K562 (cell line): ENCODE measurements at regions of chr22 and their contacts with region 1.

Region 1: DNA sequence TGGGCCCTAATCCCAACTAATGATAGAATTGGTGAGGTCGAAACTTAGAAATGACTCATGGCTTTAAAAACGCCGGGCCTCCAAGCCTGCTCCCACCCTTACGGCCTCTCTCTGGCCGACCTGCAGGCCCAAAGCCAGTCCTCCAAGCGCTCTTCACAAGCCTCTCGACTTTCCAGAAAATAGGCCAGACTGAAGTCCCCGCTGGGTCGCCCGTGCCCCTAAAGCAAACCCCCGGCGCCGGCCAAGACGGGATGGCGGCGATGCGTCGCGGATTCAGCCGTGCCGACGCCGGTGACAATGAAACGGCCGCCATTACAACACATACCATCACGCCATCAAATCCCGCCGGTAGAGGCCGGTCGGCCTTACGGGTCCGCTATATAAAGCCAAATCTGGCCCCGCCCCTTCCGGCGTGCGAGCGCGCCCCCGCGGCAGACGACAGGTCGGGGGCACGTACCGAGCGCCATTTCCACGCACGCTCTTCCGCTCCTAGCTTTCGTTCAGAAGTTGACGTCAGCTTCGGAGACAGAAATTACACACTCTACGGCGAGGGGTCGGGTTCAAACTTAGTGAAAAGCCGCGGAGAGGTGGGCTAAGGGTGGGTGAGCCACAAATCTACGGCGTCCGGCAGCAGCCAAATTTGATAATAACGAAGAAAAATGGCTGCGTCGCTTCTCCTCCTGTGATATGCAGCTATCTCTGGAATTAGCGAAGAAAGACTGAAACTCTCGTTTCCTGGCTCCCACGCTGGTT is at the start of gene RPL3:
- DNase-seq: peak; percentile 77 to 95 (median 84)
- ATAC-seq: peak; percentile 79
- H3K4me3 ChIP-seq: peak within 1 kb of the TSS; percentile 69
- H3K27ac ChIP-seq: peak within 1 kb of the TSS; percentile 100
- H3K4me1 ChIP-seq: peaks cover 13 to 20% of the 10 kb centered on the region in 2 experiments; a peak in 4 of 5 replicates
- H3K27me3 ChIP-seq: no peaks in the 10 kb centered on the region
- CTCF ChIP-seq: 0 out of 6 replicates have a peak, but pooled peaks of 1 of the 3 experiments have one; percentile 12
- EP300 ChIP-seq: peak; percentile 25; the same call in 1 of the 2 replicates
- POLR2A ChIP-seq: peak; percentile 100
- RAD21 ChIP-seq: no peak
- polyA plus RNA-seq, gene RPL3: 3,338 to 4,066 TPM

Region 2: DNA sequence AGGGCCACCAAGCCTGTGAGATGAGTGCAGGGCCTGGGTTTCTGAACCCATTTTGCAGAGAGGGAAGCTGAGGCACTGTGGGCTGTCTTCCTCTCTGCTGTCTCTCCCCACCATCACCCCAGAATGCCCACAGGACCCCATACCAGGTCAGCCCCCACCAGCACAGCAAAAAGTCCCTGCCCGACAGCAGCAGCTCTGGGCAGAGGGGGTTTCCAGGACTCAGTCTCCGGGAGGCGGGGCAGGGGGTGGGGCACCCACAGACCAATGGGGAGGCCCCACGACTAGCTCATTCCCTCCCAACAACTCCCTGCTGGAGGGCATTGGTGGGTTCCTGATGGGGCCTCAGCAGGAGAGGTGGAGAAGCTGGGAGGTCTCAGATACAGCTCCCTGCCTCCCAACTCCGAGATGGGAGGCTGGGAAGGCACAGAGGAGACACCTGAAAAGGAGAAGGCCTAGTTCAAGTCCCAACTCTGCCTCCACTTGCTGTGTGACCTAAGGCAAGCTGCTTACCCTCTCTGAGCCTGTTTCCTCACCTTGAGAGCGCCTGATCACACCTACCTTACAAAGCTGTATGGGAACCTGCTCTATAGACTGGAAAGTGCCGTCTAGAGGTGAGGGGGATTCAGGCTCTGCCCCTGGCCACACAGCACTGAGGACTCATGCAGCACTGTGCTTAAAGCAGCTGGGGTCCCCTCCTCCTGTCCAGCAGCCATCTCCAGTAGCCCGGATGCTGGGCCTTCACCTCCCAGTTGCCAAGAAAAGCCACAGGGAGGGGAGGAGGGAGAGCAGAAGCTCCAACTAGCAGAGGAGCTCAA is 170.5 kb before region 1 on chr22:
- CTCF ChIA-PET with region 1: no interaction called
- POLR2A ChIA-PET with region 1: interaction called, 12 read pairs
- in situ Hi-C with region 1: no loop called
- intact Hi-C with region 1: no loop called
- DNase-seq: peak in 3 of 4 experiments; percentile 52 to 60 (median 58)
- ATAC-seq: no peak
- H3K4me3 ChIP-seq: no peak overlapping the region
- H3K27ac ChIP-seq: no peak overlapping the region; the same call in 2 of the 3 replicates
- H3K4me1 ChIP-seq: peaks cover 7 to 55% of the 10 kb centered on the region in 2 experiments; a peak in 4 of 5 replicates
- H3K27me3 ChIP-seq: no peaks in the 10 kb centered on the region
- CTCF ChIP-seq: no peak
- EP300 ChIP-seq: no peak
- POLR2A ChIP-seq: no peak
- RAD21 ChIP-seq: no peak

Region 3: DNA sequence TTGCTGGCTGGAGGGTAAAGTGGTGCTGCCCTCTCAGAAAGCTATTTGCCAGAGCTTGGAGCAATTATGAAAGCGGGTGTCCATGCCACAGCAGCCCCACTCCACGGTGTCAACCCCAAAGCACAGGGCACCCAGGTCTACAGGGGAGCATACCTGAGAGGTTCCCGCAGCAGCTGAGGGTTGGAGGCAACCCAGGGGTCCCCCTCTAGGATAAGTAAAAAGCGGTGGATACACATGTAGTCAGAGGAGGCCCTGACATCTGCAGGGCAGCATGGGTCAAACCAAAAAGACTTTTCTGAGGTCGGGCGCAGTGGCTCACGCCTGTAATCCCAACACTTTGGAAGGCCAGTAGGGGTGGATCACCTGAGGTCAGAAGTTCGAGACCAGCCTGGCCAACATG is 129.2 kb before region 1 on chr22:
- CTCF ChIA-PET with region 1: no interaction called
- POLR2A ChIA-PET with region 1: interaction called, 11 read pairs
- in situ Hi-C with region 1: no loop called
- intact Hi-C with region 1: no loop called
- DNase-seq: no peak
- ATAC-seq: no peak
- H3K4me3 ChIP-seq: no peak overlapping the region
- H3K27ac ChIP-seq: no peak overlapping the region
- H3K4me1 ChIP-seq: peaks cover 0 to 6% of the 10 kb centered on the region in 2 experiments; a peak in 3 of 5 replicates
- H3K27me3 ChIP-seq: no peaks in the 10 kb centered on the region; a peak in 1 of 5 replicates
- CTCF ChIP-seq: no peak
- EP300 ChIP-seq: no peak
- POLR2A ChIP-seq: no peak
- RAD21 ChIP-seq: no peak

Region 4: GRCh38 chr22:39306581-39307361 is 12.7 kb before region 1 on chr22:
- CTCF ChIA-PET with region 1: no interaction called
- POLR2A ChIA-PET with region 1: interaction called, 59 read pairs
- in situ Hi-C with region 1: no loop called
- intact Hi-C with region 1: no loop called
- DNase-seq: peak; percentile 60 to 76 (median 64)
- ATAC-seq: peak; percentile 52
- H3K4me3 ChIP-seq: no peak overlapping the region
- H3K27ac ChIP-seq: no peak overlapping the region
- H3K4me1 ChIP-seq: peaks cover 8 to 31% of the 10 kb centered on the region in 2 experiments; a peak in 4 of 5 replicates
- H3K27me3 ChIP-seq: no peaks in the 10 kb centered on the region
- CTCF ChIP-seq: peak; percentile 68 to 75 (median 74)
- EP300 ChIP-seq: no peak
- POLR2A ChIP-seq: no peak
- RAD21 ChIP-seq: peak; percentile 46 to 75

Region 5: GRCh38 chr22:39349506-39349966 is 30.1 kb after region 1 on chr22:
- CTCF ChIA-PET with region 1: no interaction called
- POLR2A ChIA-PET with region 1: interaction called, 20 read pairs
- in situ Hi-C with region 1: no loop called
- intact Hi-C with region 1: no loop called
- DNase-seq: peak; percentile 47 to 96 (median 89)
- ATAC-seq: peak; percentile 59
- H3K4me3 ChIP-seq: peak overlapping the region; percentile 51
- H3K27ac ChIP-seq: no peak overlapping the region
- H3K4me1 ChIP-seq: peaks cover 10 to 34% of the 10 kb centered on the region in 2 experiments; a peak in 4 of 5 replicates
- H3K27me3 ChIP-seq: no peaks in the 10 kb centered on the region
- CTCF ChIP-seq: no peak
- EP300 ChIP-seq: no peak
- POLR2A ChIP-seq: no peak
- RAD21 ChIP-seq: no peak

Region 6: GRCh38 chr22:39428578-39429071 is 109.2 kb after region 1 on chr22:
- CTCF ChIA-PET with region 1: no interaction called
- POLR2A ChIA-PET with region 1: no interaction called
- in situ Hi-C with region 1: no loop called
- intact Hi-C with region 1: no loop called
- DNase-seq: peak in 3 of 4 experiments; percentile 18 to 40 (median 24)
- ATAC-seq: no peak
- H3K4me3 ChIP-seq: no peak overlapping the region
- H3K27ac ChIP-seq: no peak overlapping the region
- H3K4me1 ChIP-seq: peaks cover 0 to 27% of the 10 kb centered on the region in 2 experiments; a peak in 3 of 5 replicates
- H3K27me3 ChIP-seq: no peaks in the 10 kb centered on the region
- CTCF ChIP-seq: no peak
- EP300 ChIP-seq: no peak
- POLR2A ChIP-seq: no peak
- RAD21 ChIP-seq: no peak

Region 7: DNA sequence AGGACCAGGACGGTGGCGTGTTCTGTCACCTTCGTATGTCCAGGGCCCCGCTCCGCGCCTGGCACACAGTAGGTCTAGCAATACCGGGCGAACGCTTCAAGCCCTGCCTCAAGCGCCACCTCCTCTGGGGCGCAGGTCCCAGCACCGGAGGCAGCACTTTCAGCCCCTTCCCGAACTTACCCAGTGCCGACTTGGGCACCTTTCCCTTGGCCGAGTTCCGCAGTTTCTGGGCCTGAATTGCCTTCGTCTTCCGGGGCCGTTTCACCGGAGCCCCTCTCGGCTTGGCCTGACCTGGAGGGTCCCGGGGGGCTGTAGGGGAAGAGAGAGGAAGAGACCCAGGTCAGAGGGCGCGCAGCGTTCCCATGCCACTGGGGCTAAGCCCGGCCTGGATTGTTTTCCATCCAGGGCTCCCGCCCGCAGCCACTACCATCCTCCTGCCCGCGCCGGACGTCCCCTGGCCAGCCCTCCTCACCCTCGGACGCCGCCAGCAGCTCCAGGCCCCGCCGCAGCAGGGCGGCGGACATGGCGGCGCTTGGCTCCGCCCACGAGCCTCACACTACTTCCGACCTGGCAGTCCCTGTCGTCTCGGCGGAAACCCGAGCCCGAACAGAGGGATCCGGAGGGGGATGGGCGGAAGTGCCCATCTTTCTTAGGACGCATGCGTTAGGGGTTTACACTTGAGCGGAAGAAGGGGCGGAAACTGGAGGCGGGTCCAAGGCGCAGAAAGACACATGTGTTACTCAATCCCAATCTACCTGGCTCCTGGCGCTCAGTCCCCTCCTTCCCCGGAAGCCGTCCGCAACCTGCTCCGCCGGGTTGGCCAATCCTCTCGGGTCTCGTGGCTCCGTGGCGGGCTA is 213.0 kb after region 1 on chr22 and contains the start of gene RPS19BP1:
- CTCF ChIA-PET with region 1: no interaction called
- POLR2A ChIA-PET with region 1: interaction called, 42 read pairs
- in situ Hi-C with region 1: no loop called
- intact Hi-C with region 1: no loop called
- DNase-seq: peak; percentile 83 to 99 (median 88)
- ATAC-seq: peak; percentile 89
- H3K4me3 ChIP-seq: peak within 1 kb of the TSS; percentile 97
- H3K27ac ChIP-seq: peak within 1 kb of the TSS; percentile 92
- H3K4me1 ChIP-seq: peaks cover 29 to 58% of the 10 kb centered on the region in 2 experiments; a peak in 4 of 5 replicates
- H3K27me3 ChIP-seq: no peaks in the 10 kb centered on the region
- CTCF ChIP-seq: no peak
- EP300 ChIP-seq: no peak
- POLR2A ChIP-seq: peak; percentile 88
- RAD21 ChIP-seq: no peak
- polyA plus RNA-seq, gene RPS19BP1: 3.0 to 8.2 TPM